Testis (tissue), 5 donors: ENCODE measurements at regions of chr9 and their contacts with region 1.

Region 1: GRCh38 chr9:749716-750115 is 91.8 kb upstream of the DMRT1 start:
- DNase-seq: no peak
- H3K4me3 ChIP-seq: no peak overlapping the region
- H3K27ac ChIP-seq: no peak overlapping the region
- H3K4me1 ChIP-seq: peaks cover 19% of the 10 kb centered on the region
- H3K27me3 ChIP-seq: no peaks in the 10 kb centered on the region
- CTCF ChIP-seq: no peak
- POLR2A ChIP-seq: no peak

Region 2: DNA sequence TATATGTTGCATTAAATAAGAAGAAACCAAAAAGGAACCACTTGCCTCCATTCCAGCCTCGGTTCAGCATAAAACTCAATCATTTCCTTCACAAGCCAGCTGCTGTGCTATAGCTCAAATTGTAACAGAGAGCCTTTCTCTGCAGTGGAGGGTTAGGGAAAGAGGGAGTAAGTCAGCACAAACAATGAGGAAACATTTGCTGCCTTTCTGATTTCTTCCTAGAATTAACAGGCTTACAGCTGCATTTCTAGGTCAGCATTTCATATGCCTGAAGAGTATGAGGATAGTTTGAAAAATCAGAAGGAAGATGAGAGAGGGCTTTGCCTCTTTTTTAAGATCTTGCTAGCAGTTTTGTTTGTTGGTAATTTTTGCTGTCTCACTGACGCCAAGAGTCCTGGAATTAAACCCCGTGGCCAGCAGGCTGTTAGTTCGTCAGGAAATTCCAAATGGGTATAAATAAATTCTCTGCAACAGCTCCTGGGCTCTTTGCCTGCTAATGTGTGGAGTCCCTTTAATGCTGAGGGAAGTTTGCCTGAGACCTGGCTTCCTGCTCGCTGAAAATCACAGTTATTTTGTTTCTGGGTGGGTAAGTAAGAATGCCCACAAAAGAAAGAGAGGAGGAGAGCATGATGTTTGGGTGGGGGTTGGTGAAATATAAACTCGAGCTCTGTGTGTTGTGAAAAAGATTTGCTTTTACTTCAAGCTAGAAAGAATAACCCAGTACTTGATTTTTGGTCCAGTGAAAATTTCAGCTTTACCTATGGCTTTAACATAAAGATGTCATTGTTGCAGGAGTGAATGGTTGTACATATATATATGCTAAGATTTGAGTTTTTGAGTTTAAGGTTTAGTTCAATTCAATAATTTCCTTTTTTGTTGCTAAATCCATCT is 56.3 kb before region 1 on chr9:
- intact Hi-C with region 1: loop called (anchors 10 kb)
- DNase-seq: peak; percentile 66
- H3K4me3 ChIP-seq: no peak overlapping the region
- H3K27ac ChIP-seq: peak overlapping the region; percentile 78 to 85
- H3K4me1 ChIP-seq: peaks cover 31% of the 10 kb centered on the region
- H3K27me3 ChIP-seq: no peaks in the 10 kb centered on the region
- CTCF ChIP-seq: no peak
- POLR2A ChIP-seq: no peak

Region 3: DNA sequence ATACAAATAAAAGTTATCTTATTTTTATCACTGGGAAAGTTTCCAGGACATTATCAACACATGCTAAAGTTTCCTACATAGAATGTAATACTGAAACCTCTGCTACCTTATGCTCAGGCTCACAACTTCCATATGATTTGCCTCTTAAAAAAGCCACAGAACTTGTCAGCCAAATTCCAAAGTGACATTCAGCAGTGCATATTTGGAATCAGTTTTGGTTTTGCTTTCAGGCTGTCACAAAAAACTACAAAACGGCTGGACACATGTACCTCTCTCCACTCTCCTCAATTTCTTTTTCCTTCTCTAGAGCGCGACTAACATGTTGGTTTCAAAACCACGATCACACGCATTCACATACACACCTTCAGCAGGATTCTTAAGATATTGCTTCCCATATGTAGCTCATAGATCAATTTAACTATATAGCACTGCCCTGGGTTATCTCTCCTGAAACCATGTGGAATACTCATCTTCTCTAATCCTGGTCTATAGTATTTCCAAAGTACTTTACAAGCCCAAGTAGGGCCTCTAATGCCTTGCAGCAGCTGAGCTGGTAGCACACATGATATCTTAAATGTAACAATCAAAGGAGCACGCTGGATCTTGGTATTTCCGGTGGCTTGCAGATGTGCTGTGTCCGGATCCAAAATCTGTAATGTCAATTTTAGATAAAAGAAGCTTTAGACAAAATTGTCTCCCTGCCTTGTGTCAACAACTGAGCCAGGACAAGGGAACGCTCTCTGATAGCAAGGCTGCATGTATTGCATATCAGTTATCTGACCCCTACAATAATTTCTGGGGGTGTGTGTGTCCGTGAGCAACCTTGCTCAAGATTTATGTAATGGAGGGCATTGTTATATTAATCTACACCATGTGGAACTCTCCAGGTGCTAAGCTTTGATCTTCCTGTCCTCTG is 503.6 kb after region 1 on chr9:
- intact Hi-C with region 1: no loop called
- DNase-seq: no peak
- H3K4me3 ChIP-seq: no peak overlapping the region
- H3K27ac ChIP-seq: no peak overlapping the region
- H3K4me1 ChIP-seq: no peaks in the 10 kb centered on the region
- H3K27me3 ChIP-seq: no peaks in the 10 kb centered on the region
- CTCF ChIP-seq: no peak
- POLR2A ChIP-seq: no peak